Caco-2 (cell line): ENCODE measurements at regions of chr13 and their contacts with region 1.

Region 1: DNA sequence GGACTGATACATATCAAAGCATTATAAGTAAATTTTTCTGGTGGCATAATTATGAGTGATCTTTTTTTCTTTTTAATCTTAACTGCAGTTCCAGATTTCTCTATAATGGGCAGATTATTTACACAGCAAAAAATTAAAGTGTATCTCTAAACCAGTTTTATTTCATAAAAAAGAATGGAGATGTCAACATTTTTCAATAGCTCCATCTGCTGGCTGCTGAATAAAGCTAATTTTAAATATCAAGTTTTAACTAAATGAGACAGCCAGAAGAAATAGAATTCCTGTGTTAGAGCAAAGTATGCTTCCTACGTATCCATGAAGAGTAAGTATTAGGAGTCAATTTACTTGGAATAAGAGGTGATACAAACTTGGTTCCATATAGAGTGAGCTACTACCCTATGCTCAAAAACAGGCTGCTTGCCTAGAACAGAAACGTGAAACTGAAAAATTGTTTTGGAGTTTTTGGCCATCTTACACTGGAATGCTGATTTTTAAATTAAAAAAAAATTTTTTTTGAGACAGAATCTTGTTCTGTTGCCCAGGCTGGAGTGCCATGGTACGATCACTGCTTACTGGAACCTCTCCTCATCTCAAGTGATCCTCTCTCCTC is 5.0 kb upstream of the PDS5B start:
- DNase-seq: peak in 1 of 2 experiments; percentile 14
- H3K4me3 ChIP-seq: no peak overlapping the region
- H3K4me3 Mint-ChIP-seq: no peak overlapping the region
- H3K27ac Mint-ChIP-seq: no peak overlapping the region
- H3K4me1 ChIP-seq: no peaks in the 10 kb centered on the region
- H3K4me1 Mint-ChIP-seq: no peaks in the 10 kb centered on the region
- H3K27me3 ChIP-seq: no peaks in the 10 kb centered on the region
- H3K27me3 Mint-ChIP-seq: peaks cover 6% of the 10 kb centered on the region
- CTCF ChIP-seq: peak; percentile 42 to 61

Region 2: GRCh38 chr13:32381539-32381938 is 199.7 kb before region 1 on chr13:
- CTCF ChIA-PET with region 1: interaction called, 7 read pairs
- POLR2A ChIA-PET with region 1: no interaction called
- intact Hi-C with region 1: loop called (anchors 1 kb)
- DNase-seq: peak in 1 of 2 experiments; percentile 42
- H3K4me3 ChIP-seq: no peak overlapping the region
- H3K4me3 Mint-ChIP-seq: no peak overlapping the region
- H3K27ac Mint-ChIP-seq: no peak overlapping the region
- H3K4me1 ChIP-seq: no peaks in the 10 kb centered on the region
- H3K4me1 Mint-ChIP-seq: no peaks in the 10 kb centered on the region
- H3K27me3 ChIP-seq: no peaks in the 10 kb centered on the region
- H3K27me3 Mint-ChIP-seq: no peaks in the 10 kb centered on the region
- CTCF ChIP-seq: peak in 1 of 2 experiments; percentile 53